Activated naive CD4-positive, alpha-beta T cell treated with anti-CD3 and anti-CD28 coated beads for 36 hours (primary cell): ENCODE measurements at regions of chr5 and their contacts with region 1.

Region 1: GRCh38 chr5:168268949-168269943 is 22.2 kb upstream of the WWC1 start:
- DNase-seq: peak; percentile 84
- H3K4me3 Mint-ChIP-seq: peak overlapping the region; percentile 39
- H3K27ac Mint-ChIP-seq: no peak overlapping the region
- H3K4me1 Mint-ChIP-seq: peaks cover 21% of the 10 kb centered on the region
- H3K27me3 Mint-ChIP-seq: peaks cover 11% of the 10 kb centered on the region

Region 2: GRCh38 chr5:168291464-168291961 is 22.3 kb after region 1 on chr5 and contains the start of gene WWC1:
- CTCF ChIA-PET with region 1: interaction called, 3 read pairs
- intact Hi-C with region 1: loop called (anchors 1 kb)
- DNase-seq: peak; percentile 78
- H3K4me3 Mint-ChIP-seq: peak within 1 kb of the TSS; percentile 64
- H3K27ac Mint-ChIP-seq: no peak within 1 kb of the TSS
- H3K4me1 Mint-ChIP-seq: peaks cover 22% of the 10 kb centered on the region
- H3K27me3 Mint-ChIP-seq: peaks cover 39% of the 10 kb centered on the region
- total RNA-seq, gene WWC1: 1.7 to 2.1 TPM

Region 3: GRCh38 chr5:168328814-168329213 is 59.6 kb after region 1 on chr5:
- CTCF ChIA-PET with region 1: no interaction called
- intact Hi-C with region 1: no loop called
- DNase-seq: no peak
- H3K4me3 Mint-ChIP-seq: no peak overlapping the region
- H3K27ac Mint-ChIP-seq: no peak overlapping the region
- H3K4me1 Mint-ChIP-seq: peaks cover 3% of the 10 kb centered on the region
- H3K27me3 Mint-ChIP-seq: peaks cover 16% of the 10 kb centered on the region

Region 4: GRCh38 chr5:168422431-168422830 is 153.2 kb after region 1 on chr5:
- CTCF ChIA-PET with region 1: interaction called, 4 read pairs
- intact Hi-C with region 1: loop called (anchors 1 kb)
- DNase-seq: no peak
- H3K4me3 Mint-ChIP-seq: no peak overlapping the region
- H3K27ac Mint-ChIP-seq: no peak overlapping the region
- H3K4me1 Mint-ChIP-seq: no peaks in the 10 kb centered on the region
- H3K27me3 Mint-ChIP-seq: no peaks in the 10 kb centered on the region

Region 5: GRCh38 chr5:168486136-168486879 is 217.1 kb after region 1 on chr5 and contains the start of gene RARS1:
- CTCF ChIA-PET with region 1: interaction called, 12 read pairs
- intact Hi-C with region 1: loop called (anchors 2 kb)
- DNase-seq: peak; percentile 94
- H3K4me3 Mint-ChIP-seq: peak within 1 kb of the TSS; percentile 98
- H3K27ac Mint-ChIP-seq: peak within 1 kb of the TSS; percentile 91
- H3K4me1 Mint-ChIP-seq: peaks cover 34% of the 10 kb centered on the region
- H3K27me3 Mint-ChIP-seq: no peaks in the 10 kb centered on the region
- total RNA-seq, gene RARS1: 80.9 to 84.0 TPM

Region 6: DNA sequence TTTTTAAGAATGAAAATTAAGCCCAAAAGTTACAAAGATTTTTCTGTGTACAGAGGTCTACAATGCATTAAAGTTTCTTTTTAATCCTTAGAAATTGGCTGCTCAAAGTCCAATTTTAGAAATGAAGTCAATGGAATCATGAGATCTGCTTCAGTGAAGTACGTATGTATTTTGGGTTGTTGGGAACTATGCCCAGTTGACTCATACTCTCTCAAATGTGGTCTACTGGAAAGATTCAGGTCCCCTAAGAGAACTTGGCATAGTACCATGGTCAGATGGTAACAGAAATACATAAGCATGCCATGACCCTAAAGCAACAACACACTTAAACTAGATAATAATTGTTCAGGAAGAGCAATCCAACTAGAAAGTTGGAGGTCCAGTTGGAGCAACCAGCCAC is 282.9 kb after region 1 on chr5:
- CTCF ChIA-PET with region 1: no interaction called
- intact Hi-C with region 1: no loop called
- DNase-seq: no peak
- H3K4me3 Mint-ChIP-seq: no peak overlapping the region
- H3K27ac Mint-ChIP-seq: no peak overlapping the region
- H3K4me1 Mint-ChIP-seq: peaks cover 2% of the 10 kb centered on the region
- H3K27me3 Mint-ChIP-seq: no peaks in the 10 kb centered on the region

Region 7: GRCh38 chr5:168679515-168679920 is 410.3 kb after region 1 on chr5:
- CTCF ChIA-PET with region 1: no interaction called
- intact Hi-C with region 1: loop called (anchors 10 kb)
- DNase-seq: peak; percentile 78
- H3K4me3 Mint-ChIP-seq: no peak overlapping the region
- H3K27ac Mint-ChIP-seq: no peak overlapping the region
- H3K4me1 Mint-ChIP-seq: peaks cover 12% of the 10 kb centered on the region
- H3K27me3 Mint-ChIP-seq: no peaks in the 10 kb centered on the region

Region 8: GRCh38 chr5:168947212-168947868 is 678.1 kb after region 1 on chr5:
- CTCF ChIA-PET with region 1: interaction called, 4 read pairs
- intact Hi-C with region 1: loop called (anchors 10 kb)
- DNase-seq: peak; percentile 62
- H3K4me3 Mint-ChIP-seq: no peak overlapping the region
- H3K27ac Mint-ChIP-seq: no peak overlapping the region
- H3K4me1 Mint-ChIP-seq: no peaks in the 10 kb centered on the region
- H3K27me3 Mint-ChIP-seq: no peaks in the 10 kb centered on the region

Region 9: GRCh38 chr5:168987543-168988300 is 718.5 kb after region 1 on chr5:
- CTCF ChIA-PET with region 1: no interaction called
- intact Hi-C with region 1: loop called (anchors 5 kb)
- DNase-seq: peak; percentile 77
- H3K4me3 Mint-ChIP-seq: no peak overlapping the region
- H3K27ac Mint-ChIP-seq: no peak overlapping the region
- H3K4me1 Mint-ChIP-seq: no peaks in the 10 kb centered on the region
- H3K27me3 Mint-ChIP-seq: peaks cover 6% of the 10 kb centered on the region